ENCODE measurements at regions of chr2 and their contacts with region 1.

Region 1: GRCh38 chr2:233251306-233252116 is at the start of gene ATG16L1:
- DNase-seq: peak; percentile 95
- H3K4me3 Mint-ChIP-seq: peak within 1 kb of the TSS; percentile 93
- H3K27ac Mint-ChIP-seq: peak within 1 kb of the TSS; percentile 94
- H3K4me1 Mint-ChIP-seq: peaks cover 68% of the 10 kb centered on the region
- H3K27me3 Mint-ChIP-seq: no peaks in the 10 kb centered on the region
- total RNA-seq, gene ATG16L1: 42.4 and 42.7 TPM in 2 replicates

Region 2: GRCh38 chr2:232611551-232612218 is 639.8 kb before region 1 on chr2:
- intact Hi-C with region 1: loop called (anchors 1 kb)
- DNase-seq: peak; percentile 44
- H3K4me3 Mint-ChIP-seq: no peak overlapping the region
- H3K27ac Mint-ChIP-seq: no peak overlapping the region
- H3K4me1 Mint-ChIP-seq: no peaks in the 10 kb centered on the region
- H3K27me3 Mint-ChIP-seq: peaks cover 5% of the 10 kb centered on the region

Region 3: DNA sequence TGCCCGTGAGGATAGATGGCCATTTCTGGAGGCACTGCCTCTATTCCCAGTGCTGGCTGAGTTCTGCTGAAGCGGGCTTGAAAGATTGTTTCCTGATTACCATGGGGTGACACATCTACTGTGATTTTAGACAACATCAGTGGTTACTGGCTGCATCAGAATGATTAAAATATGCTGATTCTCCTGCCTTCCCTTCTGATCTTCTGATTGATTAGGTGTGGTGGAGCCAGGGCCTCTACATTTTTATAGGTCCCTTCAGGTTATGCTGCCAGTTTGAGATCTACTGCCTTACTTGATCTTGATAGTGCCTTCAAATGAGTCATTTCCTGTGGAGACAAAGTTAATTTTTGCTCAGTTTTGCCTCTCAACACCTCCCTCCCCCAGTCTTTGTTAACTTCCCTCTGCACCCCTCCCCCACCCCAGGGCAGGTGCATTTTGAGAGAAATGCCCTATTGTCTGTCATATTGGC is 413.1 kb before region 1 on chr2:
- intact Hi-C with region 1: loop called (anchors 5 kb)
- DNase-seq: peak; percentile 40
- H3K4me3 Mint-ChIP-seq: peak overlapping the region; percentile 12
- H3K27ac Mint-ChIP-seq: peak overlapping the region; percentile 83
- H3K4me1 Mint-ChIP-seq: peaks cover 34% of the 10 kb centered on the region
- H3K27me3 Mint-ChIP-seq: no peaks in the 10 kb centered on the region

Region 4: GRCh38 chr2:233084488-233084887 is 167.0 kb before region 1 on chr2:
- intact Hi-C with region 1: loop called (anchors 1 kb)
- DNase-seq: no peak
- H3K4me3 Mint-ChIP-seq: peak overlapping the region; percentile 82
- H3K27ac Mint-ChIP-seq: peak overlapping the region; percentile 91
- H3K4me1 Mint-ChIP-seq: peaks cover 83% of the 10 kb centered on the region
- H3K27me3 Mint-ChIP-seq: no peaks in the 10 kb centered on the region

Region 5: GRCh38 chr2:233267516-233268245 is 16.2 kb after region 1 on chr2:
- intact Hi-C with region 1: loop called (anchors 1 kb)
- DNase-seq: peak; percentile 83
- H3K4me3 Mint-ChIP-seq: peak overlapping the region; percentile 54
- H3K27ac Mint-ChIP-seq: peak overlapping the region; percentile 95
- H3K4me1 Mint-ChIP-seq: peaks cover 76% of the 10 kb centered on the region
- H3K27me3 Mint-ChIP-seq: no peaks in the 10 kb centered on the region

Region 6: GRCh38 chr2:233854241-233854981 is 602.9 kb after region 1 on chr2 and contains the start of gene HJURP:
- intact Hi-C with region 1: loop called (anchors 10 kb)
- DNase-seq: peak; percentile 95
- H3K4me3 Mint-ChIP-seq: peak within 1 kb of the TSS; percentile 94
- H3K27ac Mint-ChIP-seq: peak within 1 kb of the TSS; percentile 97
- H3K4me1 Mint-ChIP-seq: peaks cover 63% of the 10 kb centered on the region
- H3K27me3 Mint-ChIP-seq: no peaks in the 10 kb centered on the region
- total RNA-seq, gene HJURP: 38.2 and 40.4 TPM in 2 replicates